ENCODE measurements at regions of chr10 and their contacts with region 1.

Region 1: DNA sequence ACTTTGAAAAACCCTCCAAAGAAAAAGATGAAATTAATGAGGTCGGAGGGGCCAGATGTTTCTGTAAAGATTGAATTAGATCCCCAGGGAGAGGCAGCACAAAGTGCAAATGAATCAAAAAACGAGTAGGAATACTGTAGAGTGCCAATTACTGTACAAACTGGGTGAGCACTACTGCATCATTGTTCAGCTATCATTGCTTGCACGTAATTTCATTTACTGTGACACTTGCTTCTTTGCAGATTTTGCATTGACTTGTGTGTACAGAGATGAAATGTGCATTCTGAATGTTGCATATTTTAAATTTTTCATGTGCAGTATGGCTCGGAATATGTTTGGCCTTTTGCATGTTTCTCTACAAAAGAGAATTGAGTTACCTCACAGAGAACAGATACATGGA is 123.7 kb downstream of the LCOR start:
- DNase-seq: no peak
- ATAC-seq: no peak
- H3K4me3 ChIP-seq: no peak overlapping the region
- H3K27ac ChIP-seq: no peak overlapping the region
- H3K4me1 ChIP-seq: peaks cover 41% of the 10 kb centered on the region
- H3K27me3 ChIP-seq: no peaks in the 10 kb centered on the region
- CTCF ChIP-seq: no peak

Region 2: DNA sequence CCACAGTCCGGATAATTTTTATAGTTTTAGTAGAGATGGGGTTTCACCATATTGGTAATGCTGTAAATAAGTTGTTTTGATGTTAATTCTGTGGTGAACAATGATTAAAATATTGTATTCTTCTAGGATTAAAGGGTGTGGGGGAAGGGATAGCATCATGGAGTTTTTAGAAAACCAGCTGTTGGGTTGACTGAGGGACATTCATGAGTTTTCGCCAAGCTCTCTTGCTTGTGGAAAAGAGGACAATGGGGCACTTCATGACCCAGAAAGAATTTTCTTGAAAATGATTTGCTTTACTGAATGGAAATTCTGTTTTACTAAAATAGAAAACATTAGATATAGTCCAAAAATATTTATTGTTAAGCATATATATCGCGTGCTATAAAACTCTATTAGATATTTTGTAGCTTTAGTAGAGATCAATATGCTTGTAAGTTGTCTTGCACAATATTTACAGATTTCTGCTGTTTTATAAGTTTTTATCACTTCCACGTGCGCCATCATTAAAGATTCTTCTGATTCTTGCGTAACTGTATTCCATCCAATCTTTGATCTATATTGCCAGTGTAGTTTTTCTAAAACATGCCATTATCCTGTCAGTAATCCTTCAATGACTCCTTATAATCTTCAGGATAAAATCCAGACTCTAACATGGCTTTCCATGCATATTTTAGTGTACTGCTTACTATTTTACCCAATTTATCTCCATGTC is 81.9 kb before region 1 on chr10:
- intact Hi-C with region 1: no loop called
- DNase-seq: no peak
- ATAC-seq: no peak
- H3K4me3 ChIP-seq: no peak overlapping the region
- H3K27ac ChIP-seq: no peak overlapping the region
- H3K4me1 ChIP-seq: peaks cover 34% of the 10 kb centered on the region
- H3K27me3 ChIP-seq: no peaks in the 10 kb centered on the region
- CTCF ChIP-seq: no peak

Region 3: DNA sequence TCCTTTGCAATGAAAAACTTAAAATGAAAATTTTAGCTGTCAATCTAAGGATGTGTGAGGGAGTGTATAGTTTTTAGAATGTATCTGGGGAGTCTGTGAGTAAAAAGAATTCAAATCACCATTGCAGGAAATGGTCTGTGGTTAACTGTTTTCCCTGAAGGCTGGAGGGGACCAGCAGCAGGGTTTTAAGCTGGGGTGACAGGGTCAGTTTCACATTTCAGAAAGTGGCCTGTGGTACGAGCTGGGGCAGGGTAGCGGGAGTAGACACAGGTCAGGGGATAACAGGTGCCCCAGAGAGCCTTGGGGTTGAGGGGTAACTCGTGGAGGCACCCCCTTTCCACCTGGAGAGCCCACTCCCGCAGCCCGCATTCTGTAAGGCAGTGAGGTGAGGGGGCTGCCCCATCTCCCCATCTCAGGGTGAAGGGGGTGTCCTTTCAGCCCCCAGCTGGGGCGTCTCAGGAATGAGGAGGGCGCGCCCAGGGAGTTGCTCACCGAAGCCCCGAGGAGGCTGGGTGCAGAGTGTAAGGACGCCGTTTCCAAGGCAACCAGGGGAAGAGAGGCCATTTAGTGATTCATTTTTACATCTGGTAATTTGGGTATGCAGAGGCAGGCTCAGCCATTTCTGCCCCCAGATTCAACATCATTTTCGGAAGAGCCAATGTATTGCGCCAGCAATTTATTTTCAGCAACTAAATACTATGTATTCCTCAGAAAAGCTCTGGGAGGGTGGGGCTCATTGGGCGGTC is 61.1 kb after region 1 on chr10:
- intact Hi-C with region 1: loop called in 1 of 2 experiments (anchors 10 kb)
- DNase-seq: no peak
- ATAC-seq: no peak
- H3K4me3 ChIP-seq: no peak overlapping the region
- H3K27ac ChIP-seq: no peak overlapping the region
- H3K4me1 ChIP-seq: peaks cover 27% of the 10 kb centered on the region
- H3K27me3 ChIP-seq: no peaks in the 10 kb centered on the region
- CTCF ChIP-seq: no peak

Region 4: GRCh38 chr10:97037365-97038361 is 81.9 kb after region 1 on chr10:
- intact Hi-C with region 1: no loop called
- DNase-seq: peak; percentile 73 to 84
- ATAC-seq: peak; percentile 83 to 96 (median 92)
- H3K4me3 ChIP-seq: peak overlapping the region; percentile 56
- H3K27ac ChIP-seq: no peak overlapping the region
- H3K4me1 ChIP-seq: peaks cover 5% of the 10 kb centered on the region
- H3K27me3 ChIP-seq: no peaks in the 10 kb centered on the region
- CTCF ChIP-seq: peak; percentile 85

Measured in psoas muscle (tissue), 8 donors.